ENCODE measurements at regions of chr14 and their contacts with region 1.

Region 1: DNA sequence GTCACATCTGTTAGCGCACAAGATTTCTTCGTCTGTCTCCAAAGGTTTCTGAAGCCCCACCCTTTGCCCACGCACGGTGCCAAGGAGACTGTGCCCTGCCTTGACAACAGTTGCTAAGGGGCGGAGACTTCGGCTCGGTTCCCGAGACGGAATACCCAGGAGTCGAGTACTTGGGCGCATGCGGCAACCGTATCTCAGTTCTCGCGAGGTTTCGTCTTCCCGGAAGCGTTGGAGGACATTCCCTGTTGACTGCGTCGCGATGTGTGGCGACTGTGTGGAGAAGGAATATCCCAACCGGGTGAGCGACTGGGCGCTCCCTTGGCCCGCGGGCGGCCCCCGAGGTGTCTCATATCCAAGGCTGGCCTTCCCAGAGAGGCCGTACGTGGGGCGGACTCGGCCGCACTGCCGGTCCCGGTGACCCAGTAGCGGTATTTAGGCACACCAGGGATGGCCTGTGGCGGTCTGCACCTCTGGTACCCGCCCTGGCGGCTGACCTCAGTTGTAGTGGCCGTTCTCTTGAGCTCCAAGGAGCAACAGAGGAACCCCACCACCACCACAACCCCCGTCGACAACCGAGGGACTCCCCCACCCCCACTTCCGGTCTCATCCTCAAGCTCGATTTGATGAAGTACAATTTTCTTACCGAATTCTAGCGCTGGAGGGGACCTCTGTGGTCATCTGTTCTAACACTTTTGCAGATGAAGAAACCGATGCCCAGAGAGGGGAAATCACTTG is at the start of gene CHURC1:
- DNase-seq: peak; percentile 98
- ATAC-seq: peak; percentile 96
- H3K4me3 Mint-ChIP-seq: peak within 1 kb of the TSS; percentile 89
- H3K27ac Mint-ChIP-seq: peak within 1 kb of the TSS; percentile 95
- H3K4me1 Mint-ChIP-seq: peaks cover 45% of the 10 kb centered on the region
- H3K27me3 Mint-ChIP-seq: no peaks in the 10 kb centered on the region
- total RNA-seq, gene CHURC1: 37.6 to 66.1 TPM

Region 2: GRCh38 chr14:63641473-63642228 is 1272.8 kb before region 1 on chr14 and contains the start of gene WDR89:
- CTCF ChIA-PET with region 1: no interaction called
- POLR2A ChIA-PET with region 1: no interaction called
- intact Hi-C with region 1: loop called in 1 of 2 experiments (anchors 10 kb)
- DNase-seq: peak; percentile 98
- ATAC-seq: peak; percentile 87
- H3K4me3 Mint-ChIP-seq: peak within 1 kb of the TSS; percentile 79
- H3K27ac Mint-ChIP-seq: peak within 1 kb of the TSS; percentile 97
- H3K4me1 Mint-ChIP-seq: peaks cover 43% of the 10 kb centered on the region
- H3K27me3 Mint-ChIP-seq: no peaks in the 10 kb centered on the region
- total RNA-seq, gene WDR89: 13.9 to 27.2 TPM

Region 3: GRCh38 chr14:64540208-64541157 is 373.9 kb before region 1 on chr14 and contains the start of gene HSPA2:
- CTCF ChIA-PET with region 1: no interaction called
- POLR2A ChIA-PET with region 1: interaction called, 3 read pairs
- intact Hi-C with region 1: loop called in 1 of 2 experiments (anchors 1 kb)
- DNase-seq: peak; percentile 97
- ATAC-seq: peak; percentile 95
- H3K4me3 Mint-ChIP-seq: peak within 1 kb of the TSS; percentile 81
- H3K27ac Mint-ChIP-seq: peak within 1 kb of the TSS; percentile 96
- H3K4me1 Mint-ChIP-seq: peaks cover 28% of the 10 kb centered on the region
- H3K27me3 Mint-ChIP-seq: peaks cover 39% of the 10 kb centered on the region
- total RNA-seq, gene HSPA2: 3.2 to 4.1 TPM

Region 4: DNA sequence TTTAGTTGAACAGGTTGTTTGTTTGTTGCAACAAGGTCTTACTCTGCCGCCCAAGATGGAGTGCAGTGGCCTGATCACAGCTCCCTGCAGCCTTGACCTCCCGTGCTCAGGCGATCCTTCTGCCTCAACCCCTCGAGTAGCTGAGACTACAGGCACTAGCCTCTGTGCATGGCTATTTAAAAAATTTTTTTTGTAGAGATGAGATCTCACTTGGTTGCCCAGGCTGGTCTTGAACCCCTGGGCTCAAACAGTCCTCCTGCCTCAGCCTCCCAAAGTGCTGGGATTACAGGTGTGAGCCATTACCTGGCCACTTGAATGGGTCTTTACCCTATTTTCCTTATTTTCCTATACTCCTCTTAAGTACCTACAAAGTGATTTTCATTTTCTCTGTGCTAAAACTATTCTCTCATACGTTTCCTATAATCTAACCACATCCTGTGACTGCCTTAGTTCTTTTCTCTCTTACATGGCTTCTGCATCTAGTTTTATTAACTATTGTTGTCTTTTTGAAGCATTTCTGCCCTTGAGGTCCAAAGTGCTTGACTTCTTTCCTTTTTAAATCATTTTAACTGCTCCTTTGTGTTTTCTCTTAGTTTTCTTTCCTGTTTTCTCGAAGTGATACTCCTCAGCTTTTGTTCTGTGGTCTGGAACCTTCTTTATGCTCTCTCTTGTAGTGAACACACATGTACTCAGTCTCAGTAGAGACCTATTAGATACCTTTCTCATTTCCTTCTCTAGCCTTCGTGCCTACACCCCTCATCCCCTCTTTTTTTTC is 14.0 kb after region 1 on chr14:
- CTCF ChIA-PET with region 1: interaction called, 9 read pairs
- POLR2A ChIA-PET with region 1: no interaction called
- intact Hi-C with region 1: loop called (anchors 1 to 2 kb)
- DNase-seq: no peak
- ATAC-seq: peak; percentile 81
- H3K4me3 Mint-ChIP-seq: no peak overlapping the region
- H3K27ac Mint-ChIP-seq: no peak overlapping the region
- H3K4me1 Mint-ChIP-seq: peaks cover 31% of the 10 kb centered on the region
- H3K27me3 Mint-ChIP-seq: no peaks in the 10 kb centered on the region

Region 5: DNA sequence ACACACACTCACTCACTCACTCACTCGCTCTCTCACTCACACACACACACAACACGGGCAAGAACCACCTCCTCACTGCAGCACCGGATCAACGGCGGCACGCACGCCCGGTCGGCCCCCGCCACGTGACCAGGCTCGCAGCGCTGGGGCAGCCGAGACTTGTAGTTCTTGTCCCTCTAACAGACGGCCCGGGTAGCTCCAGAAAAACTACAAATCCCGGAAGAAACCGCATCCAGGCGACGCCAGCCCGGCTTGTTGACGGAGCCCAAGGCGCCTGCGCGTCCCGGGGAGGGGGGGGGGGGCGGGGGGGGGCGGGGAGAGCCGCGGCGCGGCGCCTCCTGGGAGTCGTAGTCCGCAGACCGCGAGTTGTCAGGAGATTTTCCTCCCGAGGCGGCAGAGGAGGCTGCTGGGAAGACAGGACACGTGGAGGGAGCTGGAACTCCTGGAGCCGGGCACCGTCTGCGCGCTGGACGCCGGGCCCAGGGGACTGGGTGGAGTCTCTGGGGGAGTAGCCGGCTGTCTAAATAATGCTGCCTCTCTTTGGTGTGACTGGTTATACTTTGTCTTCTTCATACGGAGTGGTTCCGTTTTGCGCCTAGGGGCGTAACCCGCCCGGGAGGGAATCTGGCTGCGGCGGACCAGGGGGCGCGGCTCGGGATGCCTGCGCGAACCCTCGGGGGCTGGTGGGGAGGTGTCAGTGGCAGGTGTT is 188.2 kb after region 1 on chr14 and contains the start of gene MAX:
- CTCF ChIA-PET with region 1: no interaction called
- POLR2A ChIA-PET with region 1: interaction called, 3 read pairs
- intact Hi-C with region 1: loop called in 1 of 2 experiments (anchors 1 kb)
- DNase-seq: peak; percentile 99
- ATAC-seq: peak; percentile 95
- H3K4me3 Mint-ChIP-seq: peak within 1 kb of the TSS; percentile 89
- H3K27ac Mint-ChIP-seq: peak within 1 kb of the TSS; percentile 96
- H3K4me1 Mint-ChIP-seq: peaks cover 40% of the 10 kb centered on the region
- H3K27me3 Mint-ChIP-seq: peaks cover 2% of the 10 kb centered on the region
- total RNA-seq, gene MAX: 93.6 to 136 TPM